HAP-1 (cell line): ENCODE measurements at regions of chr11 and their contacts with region 1.

Region 1: GRCh38 chr11:111601979-111602864 is at the start of gene SIK2:
- DNase-seq: peak; percentile 94 to 96
- H3K4me3 ChIP-seq: peak within 1 kb of the TSS; percentile 69
- H3K4me1 ChIP-seq: peaks cover 16% of the 10 kb centered on the region
- H3K27me3 ChIP-seq: no peaks in the 10 kb centered on the region

Region 2: GRCh38 chr11:111735262-111736116 is 133.3 kb after region 1 on chr11:
- in situ Hi-C with region 1: no loop called
- DNase-seq: no peak
- H3K4me3 ChIP-seq: no peak overlapping the region
- H3K4me1 ChIP-seq: no peaks in the 10 kb centered on the region
- H3K27me3 ChIP-seq: no peaks in the 10 kb centered on the region

Region 3: GRCh38 chr11:111766093-111766833 is 164.0 kb after region 1 on chr11 and contains the start of gene PPP2R1B:
- in situ Hi-C with region 1: loop called (anchors 5 kb)
- DNase-seq: peak; percentile 78 to 81
- H3K4me3 ChIP-seq: peak within 1 kb of the TSS; percentile 93
- H3K4me1 ChIP-seq: peaks cover 17% of the 10 kb centered on the region
- H3K27me3 ChIP-seq: no peaks in the 10 kb centered on the region

Region 4: DNA sequence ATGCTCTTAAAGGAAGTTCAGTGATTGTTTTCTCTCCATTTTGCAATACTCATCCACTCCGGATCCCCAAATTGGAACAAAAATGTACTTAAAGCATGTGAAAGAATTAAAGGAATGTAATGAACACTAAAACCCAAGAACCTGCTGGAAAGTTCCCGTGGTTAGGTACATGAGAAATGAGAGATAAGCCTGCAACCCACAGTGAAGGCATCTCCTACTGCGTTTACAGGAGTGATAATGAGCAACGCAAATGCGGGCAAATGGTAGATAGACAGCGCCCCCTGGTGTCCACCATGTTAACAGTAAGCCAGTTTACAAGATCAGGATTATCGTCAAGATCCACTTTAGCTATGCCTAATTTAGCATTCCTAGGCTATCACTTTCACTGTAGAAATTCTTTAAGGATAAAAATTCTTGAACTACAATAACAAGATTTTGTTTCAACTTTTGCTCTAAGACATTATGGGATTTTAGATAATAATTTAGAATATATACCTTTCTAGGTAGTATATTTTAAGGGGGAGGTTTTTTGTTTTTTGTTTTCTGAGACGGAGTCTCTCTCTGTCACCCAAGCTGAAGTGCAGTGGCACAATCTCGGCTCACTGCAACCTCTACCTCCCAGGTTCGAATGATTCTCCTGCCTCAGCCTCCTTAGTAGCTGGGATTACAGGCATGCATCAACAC is 239.3 kb after region 1 on chr11:
- in situ Hi-C with region 1: loop called (anchors 5 kb)
- DNase-seq: peak; percentile 70 to 92
- H3K4me3 ChIP-seq: no peak overlapping the region
- H3K4me1 ChIP-seq: no peaks in the 10 kb centered on the region
- H3K27me3 ChIP-seq: no peaks in the 10 kb centered on the region